Ascending aorta (tissue), 2 donors: ENCODE measurements at regions of chr3 and their contacts with region 1.

Region 1: GRCh38 chr3:146975476-146975875 is 370.3 kb upstream of the PLSCR5 start:
- DNase-seq: no peak
- H3K4me3 ChIP-seq: no peak overlapping the region
- H3K27ac ChIP-seq: no peak overlapping the region
- H3K4me1 ChIP-seq: no peaks in the 10 kb centered on the region
- H3K27me3 ChIP-seq: no peaks in the 10 kb centered on the region
- CTCF ChIP-seq: no peak

Region 2: GRCh38 chr3:145209561-145209960 is 1765.9 kb before region 1 on chr3:
- intact Hi-C with region 1: no loop called
- DNase-seq: no peak
- H3K4me3 ChIP-seq: no peak overlapping the region
- H3K27ac ChIP-seq: no peak overlapping the region
- H3K4me1 ChIP-seq: no peaks in the 10 kb centered on the region
- H3K27me3 ChIP-seq: no peaks in the 10 kb centered on the region
- CTCF ChIP-seq: no peak

Region 3: GRCh38 chr3:146557492-146558144 is 417.9 kb before region 1 on chr3:
- intact Hi-C with region 1: no loop called
- DNase-seq: no peak
- H3K4me3 ChIP-seq: no peak overlapping the region
- H3K27ac ChIP-seq: no peak overlapping the region
- H3K4me1 ChIP-seq: no peaks in the 10 kb centered on the region
- H3K27me3 ChIP-seq: no peaks in the 10 kb centered on the region
- CTCF ChIP-seq: no peak

Region 4: GRCh38 chr3:147572970-147573340 is 597.5 kb after region 1 on chr3:
- intact Hi-C with region 1: loop called (anchors 10 kb)
- DNase-seq: no peak
- H3K4me3 ChIP-seq: no peak overlapping the region
- H3K27ac ChIP-seq: no peak overlapping the region
- H3K4me1 ChIP-seq: no peaks in the 10 kb centered on the region
- H3K27me3 ChIP-seq: no peaks in the 10 kb centered on the region
- CTCF ChIP-seq: no peak